HCT116 (cell line): ENCODE measurements at regions of chr3 and their contacts with region 1.

Region 1: GRCh38 chr3:42190701-42191462 is 75.1 kb downstream of the CCK start:
- DNase-seq: peak; percentile 41
- ATAC-seq: peak; percentile 86
- H3K4me3 ChIP-seq: no peak overlapping the region
- H3K27ac ChIP-seq: no peak overlapping the region
- H3K4me1 ChIP-seq: peaks cover 21 to 32% of the 10 kb centered on the region in 2 experiments
- H3K27me3 ChIP-seq: no peaks in the 10 kb centered on the region
- CTCF ChIP-seq: peak; percentile 77 to 96 (median 88)
- POLR2A ChIP-seq: no peak
- RAD21 ChIP-seq: peak; percentile 87

Region 2: GRCh38 chr3:41893977-41894376 is 296.9 kb before region 1 on chr3:
- CTCF ChIA-PET with region 1: interaction called, 12 read pairs
- POLR2A ChIA-PET with region 1: no interaction called
- RAD21 ChIA-PET with region 1: no interaction called
- intact Hi-C with region 1: loop called (anchors 1 kb)
- DNase-seq: peak; percentile 51
- ATAC-seq: peak; percentile 58; the same call in 1 of the 2 replicates
- H3K4me3 ChIP-seq: no peak overlapping the region
- H3K27ac ChIP-seq: no peak overlapping the region
- H3K4me1 ChIP-seq: no peaks in the 10 kb centered on the region
- H3K27me3 ChIP-seq: no peaks in the 10 kb centered on the region
- CTCF ChIP-seq: peak; percentile 30 to 72 (median 61)
- POLR2A ChIP-seq: no peak
- RAD21 ChIP-seq: peak; percentile 81

Region 3: GRCh38 chr3:42036483-42036823 is 154.4 kb before region 1 on chr3:
- CTCF ChIA-PET with region 1: no interaction called
- POLR2A ChIA-PET with region 1: no interaction called
- RAD21 ChIA-PET with region 1: no interaction called
- intact Hi-C with region 1: no loop called
- DNase-seq: no peak
- ATAC-seq: no peak
- H3K4me3 ChIP-seq: no peak overlapping the region
- H3K27ac ChIP-seq: no peak overlapping the region
- H3K4me1 ChIP-seq: peaks cover 5 to 39% of the 10 kb centered on the region in 2 experiments; a peak in 3 of 4 replicates
- H3K27me3 ChIP-seq: no peaks in the 10 kb centered on the region
- CTCF ChIP-seq: no peak
- POLR2A ChIP-seq: no peak
- RAD21 ChIP-seq: no peak

Region 4: DNA sequence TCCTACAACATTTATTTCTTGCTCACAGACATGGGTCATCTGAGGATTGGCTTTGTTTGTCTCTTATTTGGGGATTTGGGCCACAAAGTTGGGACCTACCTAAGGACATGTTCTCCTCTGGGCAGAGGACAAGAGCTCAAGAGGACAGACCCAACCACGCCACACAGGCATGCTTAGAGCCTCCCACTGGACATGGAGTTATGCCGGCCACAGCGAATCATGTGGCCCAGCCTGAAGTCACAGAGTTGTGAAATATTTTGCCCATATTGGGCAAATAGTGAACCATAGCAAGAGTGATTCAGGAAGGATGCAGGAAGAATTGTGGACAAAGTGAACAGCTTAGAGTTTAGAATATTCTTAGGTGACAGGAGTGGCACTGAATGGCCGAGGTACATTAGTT is 89.8 kb before region 1 on chr3:
- CTCF ChIA-PET with region 1: interaction called, 11 read pairs
- POLR2A ChIA-PET with region 1: no interaction called
- RAD21 ChIA-PET with region 1: interaction called, 3 to 7 read pairs
- intact Hi-C with region 1: no loop called
- DNase-seq: no peak
- ATAC-seq: no peak
- H3K4me3 ChIP-seq: no peak overlapping the region
- H3K27ac ChIP-seq: no peak overlapping the region
- H3K4me1 ChIP-seq: peaks cover 10 to 13% of the 10 kb centered on the region in 2 experiments; a peak in 3 of 4 replicates
- H3K27me3 ChIP-seq: no peaks in the 10 kb centered on the region
- CTCF ChIP-seq: no peak
- POLR2A ChIP-seq: no peak
- RAD21 ChIP-seq: no peak

Region 5: DNA sequence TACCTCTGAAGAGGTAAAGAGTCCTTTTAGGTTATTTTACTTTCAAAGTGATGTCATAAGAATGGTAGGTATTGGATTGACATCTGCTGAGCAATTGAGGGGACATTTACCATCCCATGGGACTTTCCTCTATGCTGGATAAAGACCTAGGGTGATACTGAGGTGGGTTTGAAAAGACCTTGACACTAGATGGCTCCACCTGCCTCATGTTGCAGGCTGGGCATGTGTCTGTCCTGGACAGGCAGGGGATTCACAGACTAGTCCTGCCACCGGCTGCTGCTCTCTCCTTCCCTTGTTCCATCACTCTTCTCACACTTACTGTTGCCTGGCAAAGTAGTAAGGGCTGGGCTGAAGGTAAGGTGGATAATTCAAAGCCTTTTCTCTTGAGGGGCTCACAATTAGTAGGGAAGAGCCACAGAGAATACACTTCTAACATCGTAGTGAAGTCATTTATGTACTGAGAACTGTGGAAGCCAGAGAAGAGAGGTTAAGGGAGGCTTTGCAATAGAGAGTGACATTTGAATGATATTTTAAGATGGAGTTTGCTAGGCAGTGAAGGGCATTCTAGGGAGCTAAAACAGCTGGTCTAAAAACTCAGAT is 72.0 kb before region 1 on chr3:
- CTCF ChIA-PET with region 1: interaction called, 185 read pairs
- POLR2A ChIA-PET with region 1: interaction called, 4 read pairs
- RAD21 ChIA-PET with region 1: interaction called, 14 to 15 read pairs
- intact Hi-C with region 1: loop called (anchors 1 kb)
- DNase-seq: peak; percentile 47
- ATAC-seq: peak; percentile 86
- H3K4me3 ChIP-seq: no peak overlapping the region
- H3K27ac ChIP-seq: no peak overlapping the region
- H3K4me1 ChIP-seq: peaks cover 40 to 51% of the 10 kb centered on the region in 2 experiments
- H3K27me3 ChIP-seq: no peaks in the 10 kb centered on the region
- CTCF ChIP-seq: peak; percentile 66 to 79 (median 67); a peak in 5 of 6 replicates
- POLR2A ChIP-seq: no peak
- RAD21 ChIP-seq: peak; percentile 84

Region 6: GRCh38 chr3:42129014-42129953 is 61.6 kb before region 1 on chr3:
- CTCF ChIA-PET with region 1: interaction called, 11 read pairs
- POLR2A ChIA-PET with region 1: no interaction called
- RAD21 ChIA-PET with region 1: interaction called in 1 of 2 experiments, 3 read pairs
- intact Hi-C with region 1: no loop called
- DNase-seq: peak; percentile 37
- ATAC-seq: peak; percentile 90
- H3K4me3 ChIP-seq: 0 out of 4 replicates have a peak overlapping the region, but pooled peaks of 1 of the 2 experiments have one; percentile 1
- H3K27ac ChIP-seq: peak overlapping the region; percentile 4; the same call in 1 of the 2 replicates
- H3K4me1 ChIP-seq: peaks cover 18 to 21% of the 10 kb centered on the region in 2 experiments
- H3K27me3 ChIP-seq: no peaks in the 10 kb centered on the region
- CTCF ChIP-seq: no peak
- POLR2A ChIP-seq: no peak
- RAD21 ChIP-seq: peak; percentile 8; the same call in 1 of the 2 replicates

Region 7: DNA sequence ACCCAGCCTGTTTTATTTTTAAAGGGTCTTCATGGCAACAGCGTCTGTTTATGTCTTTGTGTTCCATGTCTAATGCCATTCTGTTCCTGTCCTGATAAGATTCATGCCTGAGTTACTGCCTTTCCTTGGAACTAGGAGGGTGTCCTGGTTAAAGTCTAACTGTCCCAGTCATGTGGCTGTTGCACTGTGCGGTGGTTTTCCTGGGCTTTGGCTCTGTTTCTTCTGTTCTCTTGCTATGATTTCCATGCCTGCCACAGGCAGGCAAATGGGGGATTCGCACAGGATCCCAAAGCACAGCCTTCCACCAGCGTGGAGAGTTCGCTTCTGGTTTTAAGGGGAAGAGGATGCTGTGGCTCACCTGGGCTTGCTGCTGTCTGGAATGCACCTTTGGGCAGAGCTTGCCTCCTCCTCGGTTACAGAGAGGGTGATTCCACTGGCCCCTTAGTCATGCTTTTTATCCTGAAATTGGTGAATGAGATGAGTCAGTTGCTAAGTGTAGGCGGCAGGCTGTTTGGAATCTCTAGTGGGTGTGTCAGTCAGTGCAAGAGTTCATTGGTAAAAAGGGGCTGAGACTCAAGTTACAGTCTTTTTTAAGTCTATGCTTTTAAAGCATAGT is 11.7 kb before region 1 on chr3:
- CTCF ChIA-PET with region 1: interaction called, 22 read pairs
- POLR2A ChIA-PET with region 1: no interaction called
- RAD21 ChIA-PET with region 1: interaction called in 1 of 2 experiments, 3 read pairs
- intact Hi-C with region 1: no loop called
- DNase-seq: peak; percentile 85
- ATAC-seq: peak; percentile 98
- H3K4me3 ChIP-seq: peak overlapping the region in 1 of 2 experiments; percentile 35; a peak in 2 of 4 replicates
- H3K27ac ChIP-seq: peak overlapping the region; percentile 44; the same call in 1 of the 2 replicates
- H3K4me1 ChIP-seq: peaks cover 24 to 52% of the 10 kb centered on the region in 2 experiments
- H3K27me3 ChIP-seq: no peaks in the 10 kb centered on the region
- CTCF ChIP-seq: no peak
- POLR2A ChIP-seq: no peak
- RAD21 ChIP-seq: no peak

Region 8: DNA sequence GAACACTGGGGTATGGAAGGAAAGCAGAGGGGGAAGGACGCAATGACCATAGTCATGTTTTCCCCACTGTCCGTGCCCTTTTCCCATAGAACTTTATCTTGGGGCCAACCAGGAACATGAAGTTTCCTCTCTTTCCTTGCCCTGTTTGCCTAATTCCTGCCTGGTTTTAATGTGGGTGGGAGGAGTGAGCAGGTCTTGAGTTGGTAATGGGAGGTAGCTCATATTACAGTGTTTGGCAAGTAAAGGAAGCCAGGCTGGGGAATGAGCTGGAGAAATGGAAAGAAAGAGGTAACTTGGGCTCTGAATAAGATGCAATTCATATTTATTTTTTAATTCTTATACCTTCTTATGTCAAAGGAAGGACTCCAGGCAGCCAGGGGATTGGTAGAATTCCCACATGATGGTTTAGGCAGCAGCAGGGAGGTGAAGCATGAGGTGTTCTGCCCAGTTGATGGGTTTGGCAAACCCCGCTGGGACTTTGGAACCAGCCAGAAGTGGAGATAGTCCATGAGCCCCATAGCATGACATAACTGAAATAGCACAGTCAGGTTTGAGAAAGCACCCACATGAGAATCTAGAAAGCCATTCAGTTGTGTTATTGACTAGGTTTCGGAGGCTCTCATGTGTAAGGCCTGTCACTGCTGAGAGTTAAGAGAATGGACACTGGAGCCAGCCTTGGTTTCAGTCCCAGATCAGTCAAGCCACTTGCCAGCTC is 15.1 kb after region 1 on chr3:
- CTCF ChIA-PET with region 1: interaction called, 21 read pairs
- POLR2A ChIA-PET with region 1: no interaction called
- RAD21 ChIA-PET with region 1: no interaction called
- intact Hi-C with region 1: no loop called
- DNase-seq: no peak
- ATAC-seq: no peak
- H3K4me3 ChIP-seq: no peak overlapping the region
- H3K27ac ChIP-seq: no peak overlapping the region
- H3K4me1 ChIP-seq: no peaks in the 10 kb centered on the region
- H3K27me3 ChIP-seq: no peaks in the 10 kb centered on the region
- CTCF ChIP-seq: no peak
- POLR2A ChIP-seq: no peak
- RAD21 ChIP-seq: no peak